ENCODE measurements at regions of chr2 and their contacts with region 1.

Region 1: DNA sequence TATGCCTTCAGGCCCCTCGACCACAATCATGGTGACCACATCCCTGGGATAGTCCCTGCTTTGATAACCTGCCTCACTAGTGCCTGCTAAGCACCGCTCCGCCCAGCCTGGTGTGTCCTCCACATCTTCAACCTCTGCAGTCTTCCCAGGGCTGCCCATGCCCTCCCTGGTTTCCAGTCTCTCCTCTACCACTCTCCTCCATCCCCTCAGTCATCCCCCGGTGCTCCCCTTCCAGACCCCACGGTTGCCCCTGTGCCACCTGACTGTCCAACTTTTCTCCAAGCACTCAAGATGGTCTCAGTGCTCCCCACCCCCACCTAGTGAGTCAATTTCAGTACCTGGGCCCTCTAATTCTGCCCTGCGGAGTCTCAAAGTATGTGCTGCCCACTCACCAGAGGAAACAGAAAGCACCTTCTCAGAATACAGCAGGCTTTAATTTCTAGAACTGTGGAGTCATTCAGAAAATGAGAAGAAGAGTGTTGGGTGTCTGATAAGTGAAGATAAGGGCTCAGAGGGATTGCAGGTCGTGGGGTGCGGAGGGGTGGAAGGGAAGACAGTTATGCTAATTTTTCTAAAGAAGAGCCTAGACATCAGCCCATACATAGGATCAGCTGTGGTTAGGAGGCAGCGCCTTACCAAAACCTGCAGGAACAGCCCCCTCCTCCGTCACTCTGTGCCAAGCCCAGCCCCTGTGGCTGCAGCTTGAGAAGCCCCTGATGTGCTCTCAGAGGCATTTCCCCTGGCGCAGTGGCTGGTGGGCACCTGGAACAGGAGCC is 53.6 kb upstream of the CAB39 start:
- DNase-seq: peak; percentile 90
- H3K4me3 Mint-ChIP-seq: peak overlapping the region; percentile 88
- H3K27ac Mint-ChIP-seq: peak overlapping the region; percentile 99
- H3K4me1 Mint-ChIP-seq: peaks cover 88% of the 10 kb centered on the region
- H3K27me3 Mint-ChIP-seq: no peaks in the 10 kb centered on the region

Region 2: GRCh38 chr2:230326453-230327417 is 332.3 kb before region 1 on chr2 and contains the start of gene SP140L:
- CTCF ChIA-PET with region 1: no interaction called
- POLR2A ChIA-PET with region 1: no interaction called
- intact Hi-C with region 1: loop called (anchors 5 kb)
- DNase-seq: peak; percentile 87
- H3K4me3 Mint-ChIP-seq: peak within 1 kb of the TSS; percentile 88
- H3K27ac Mint-ChIP-seq: peak within 1 kb of the TSS; percentile 94
- H3K4me1 Mint-ChIP-seq: peaks cover 56% of the 10 kb centered on the region
- H3K27me3 Mint-ChIP-seq: no peaks in the 10 kb centered on the region
- total RNA-seq, gene SP140L: 41.9 to 44.1 TPM

Region 3: GRCh38 chr2:230505162-230505561 is 153.9 kb before region 1 on chr2:
- CTCF ChIA-PET with region 1: no interaction called
- POLR2A ChIA-PET with region 1: no interaction called
- intact Hi-C with region 1: no loop called
- DNase-seq: no peak
- H3K4me3 Mint-ChIP-seq: no peak overlapping the region
- H3K27ac Mint-ChIP-seq: no peak overlapping the region
- H3K4me1 Mint-ChIP-seq: peaks cover 3% of the 10 kb centered on the region
- H3K27me3 Mint-ChIP-seq: no peaks in the 10 kb centered on the region

Region 4: GRCh38 chr2:230582851-230583283 is 76.2 kb before region 1 on chr2:
- CTCF ChIA-PET with region 1: no interaction called
- POLR2A ChIA-PET with region 1: no interaction called
- intact Hi-C with region 1: loop called (anchors 2 kb)
- DNase-seq: peak; percentile 69
- H3K4me3 Mint-ChIP-seq: no peak overlapping the region
- H3K27ac Mint-ChIP-seq: peak overlapping the region; percentile 79
- H3K4me1 Mint-ChIP-seq: peaks cover 24% of the 10 kb centered on the region
- H3K27me3 Mint-ChIP-seq: no peaks in the 10 kb centered on the region

Region 5: DNA sequence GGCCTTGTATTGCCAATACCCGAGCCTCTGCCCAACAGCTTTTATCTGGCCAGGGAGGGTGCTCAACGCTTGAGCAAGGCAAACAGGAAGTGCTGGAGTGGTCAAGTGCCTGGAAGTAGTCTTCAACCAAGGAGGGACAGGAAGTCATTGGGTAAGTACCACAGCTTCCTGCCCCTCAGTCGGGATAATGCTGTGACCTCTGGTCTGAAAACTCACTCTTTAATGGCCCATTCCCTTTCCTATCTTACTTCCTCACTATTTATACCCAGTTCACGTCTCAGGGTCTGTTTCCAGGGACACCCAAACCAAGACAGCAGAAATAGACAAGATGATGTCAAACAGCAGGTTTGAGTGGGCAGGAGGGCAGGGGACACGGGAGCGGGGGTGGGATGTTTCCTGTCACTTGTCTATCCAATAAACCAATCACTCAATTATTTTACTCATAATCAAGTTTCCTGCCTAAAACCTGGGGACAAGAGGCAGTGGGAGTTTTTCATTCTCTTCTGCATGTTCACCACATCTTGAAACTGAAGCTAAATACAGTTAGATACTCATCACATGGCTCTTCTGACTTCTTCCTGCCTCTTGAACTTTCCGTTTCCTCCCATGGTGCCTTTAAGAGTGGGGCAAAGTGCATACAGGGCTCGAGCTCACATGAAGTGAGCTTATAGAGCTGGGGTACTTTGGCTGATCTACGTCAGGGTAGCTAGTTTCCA is 15.3 kb before region 1 on chr2:
- CTCF ChIA-PET with region 1: interaction called, 7 read pairs
- POLR2A ChIA-PET with region 1: interaction called, 78 read pairs
- intact Hi-C with region 1: loop called (anchors 1 kb)
- DNase-seq: peak; percentile 86
- H3K4me3 Mint-ChIP-seq: peak overlapping the region; percentile 49
- H3K27ac Mint-ChIP-seq: peak overlapping the region; percentile 98
- H3K4me1 Mint-ChIP-seq: peaks cover 29% of the 10 kb centered on the region
- H3K27me3 Mint-ChIP-seq: no peaks in the 10 kb centered on the region

Region 6: GRCh38 chr2:230793572-230794359 is 134.7 kb after region 1 on chr2:
- CTCF ChIA-PET with region 1: interaction called, 29 read pairs
- POLR2A ChIA-PET with region 1: interaction called, 10 read pairs
- intact Hi-C with region 1: loop called (anchors 1 kb)
- DNase-seq: peak; percentile 87
- H3K4me3 Mint-ChIP-seq: peak overlapping the region; percentile 62
- H3K27ac Mint-ChIP-seq: no peak overlapping the region
- H3K4me1 Mint-ChIP-seq: peaks cover 55% of the 10 kb centered on the region
- H3K27me3 Mint-ChIP-seq: no peaks in the 10 kb centered on the region

Region 7: GRCh38 chr2:231056453-231057424 is 397.7 kb after region 1 on chr2 and contains the start of gene PSMD1:
- CTCF ChIA-PET with region 1: no interaction called
- POLR2A ChIA-PET with region 1: no interaction called
- intact Hi-C with region 1: loop called (anchors 10 kb)
- DNase-seq: peak; percentile 95
- H3K4me3 Mint-ChIP-seq: peak within 1 kb of the TSS; percentile 90
- H3K27ac Mint-ChIP-seq: peak within 1 kb of the TSS; percentile 98
- H3K4me1 Mint-ChIP-seq: peaks cover 56% of the 10 kb centered on the region
- H3K27me3 Mint-ChIP-seq: peaks cover 1% of the 10 kb centered on the region
- total RNA-seq, gene PSMD1: 116 TPM